Esophagus muscularis mucosa (tissue), 4 donors: ENCODE measurements at regions of chr1 and their contacts with region 1.

Region 1: DNA sequence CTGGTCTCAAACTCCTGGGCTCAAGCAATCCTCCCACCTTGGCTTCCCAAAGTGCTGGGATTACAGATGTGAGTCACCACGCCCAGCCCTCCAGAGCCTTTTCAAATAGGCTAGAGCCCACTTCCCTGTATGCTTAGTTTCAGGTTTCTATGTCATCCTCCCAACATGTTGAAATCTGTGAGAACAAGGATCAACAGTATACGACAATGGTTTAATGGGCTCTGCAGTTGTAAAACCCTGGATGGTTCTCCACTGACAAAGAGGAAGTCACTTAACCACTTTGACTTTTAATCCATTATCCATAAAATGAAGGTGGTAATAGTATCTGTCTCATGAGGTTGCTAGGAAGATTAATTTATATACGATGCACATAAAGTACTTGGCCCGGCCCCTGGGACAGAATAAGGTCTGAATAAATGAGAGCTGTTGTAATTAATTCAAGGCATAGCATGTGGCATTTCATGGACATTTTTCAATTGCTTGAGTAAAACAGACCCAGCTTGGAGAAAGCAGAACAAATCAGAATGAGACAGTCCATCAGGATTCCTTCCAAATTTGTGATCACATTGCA is 113.9 kb upstream of the ZNF648 start:
- DNase-seq: no peak
- H3K4me3 ChIP-seq: no peak overlapping the region
- H3K27ac ChIP-seq: peak overlapping the region; percentile 76 to 88 (median 82)
- H3K4me1 ChIP-seq: peaks cover 25 to 45% (median 42%) of the 10 kb centered on the region in 4 donors
- H3K27me3 ChIP-seq: no peaks in the 10 kb centered on the region
- CTCF ChIP-seq: no peak
- EP300 ChIP-seq: no peak
- POLR2A ChIP-seq: no peak

Region 2: DNA sequence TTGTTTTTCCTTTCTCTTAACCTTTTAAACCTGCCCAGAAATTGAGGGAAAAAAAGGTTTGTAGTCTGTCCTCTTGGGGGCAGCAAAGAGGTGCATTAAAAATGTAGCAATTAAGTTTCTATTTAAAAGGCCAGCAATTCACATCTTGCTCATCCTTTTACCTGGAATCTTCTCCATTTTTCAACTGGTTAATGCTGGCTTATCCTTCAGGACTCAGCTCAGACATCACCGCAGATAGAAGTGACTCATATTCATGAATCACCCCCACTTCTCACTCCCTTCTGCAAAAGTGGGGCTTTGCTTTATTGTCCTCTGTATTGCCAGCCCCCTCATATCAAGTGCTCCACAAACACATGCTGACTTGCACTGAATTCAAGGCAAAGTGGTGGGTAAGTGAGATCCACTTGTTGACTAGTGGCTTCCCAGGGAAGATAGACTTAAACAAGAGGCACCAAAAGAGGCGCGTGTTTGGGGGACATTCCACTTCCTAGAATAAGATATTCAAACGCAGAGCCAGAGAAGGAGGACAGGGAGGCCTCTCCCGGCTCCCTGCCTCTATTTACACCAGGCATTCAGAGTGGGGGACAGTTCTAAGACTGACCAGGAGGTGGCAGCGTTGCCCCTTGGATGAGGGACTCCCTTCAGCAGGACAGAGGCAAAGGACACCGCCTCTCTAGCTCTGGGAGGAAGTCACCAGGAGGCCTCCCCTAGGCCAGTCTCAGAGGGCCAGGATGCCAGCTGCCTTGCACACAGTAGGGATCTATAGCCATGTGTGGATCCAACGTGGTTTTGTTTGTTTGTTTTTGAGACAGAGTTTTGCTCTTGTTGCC is 90.7 kb before region 1 on chr1:
- intact Hi-C with region 1: no loop called
- DNase-seq: peak; percentile 98
- H3K4me3 ChIP-seq: no peak overlapping the region
- H3K27ac ChIP-seq: peak overlapping the region; percentile 8 to 56 (median 42)
- H3K4me1 ChIP-seq: peaks cover 7 to 15% (median 12%) of the 10 kb centered on the region in 4 donors
- H3K27me3 ChIP-seq: no peaks in the 10 kb centered on the region
- CTCF ChIP-seq: peak; percentile 81 to 96 (median 91)
- EP300 ChIP-seq: no peak
- POLR2A ChIP-seq: no peak

Region 3: GRCh38 chr1:182299728-182300616 is 124.5 kb after region 1 on chr1:
- intact Hi-C with region 1: loop called (anchors 10 kb)
- DNase-seq: no peak
- H3K4me3 ChIP-seq: no peak overlapping the region
- H3K27ac ChIP-seq: no peak overlapping the region
- H3K4me1 ChIP-seq: peaks cover 13 to 86% (median 43%) of the 10 kb centered on the region in 4 donors
- H3K27me3 ChIP-seq: no peaks in the 10 kb centered on the region
- CTCF ChIP-seq: no peak
- EP300 ChIP-seq: no peak
- POLR2A ChIP-seq: no peak